Heart left ventricle (tissue), 16 donors: ENCODE measurements at regions of chr16 and their contacts with region 1.

Region 1: DNA sequence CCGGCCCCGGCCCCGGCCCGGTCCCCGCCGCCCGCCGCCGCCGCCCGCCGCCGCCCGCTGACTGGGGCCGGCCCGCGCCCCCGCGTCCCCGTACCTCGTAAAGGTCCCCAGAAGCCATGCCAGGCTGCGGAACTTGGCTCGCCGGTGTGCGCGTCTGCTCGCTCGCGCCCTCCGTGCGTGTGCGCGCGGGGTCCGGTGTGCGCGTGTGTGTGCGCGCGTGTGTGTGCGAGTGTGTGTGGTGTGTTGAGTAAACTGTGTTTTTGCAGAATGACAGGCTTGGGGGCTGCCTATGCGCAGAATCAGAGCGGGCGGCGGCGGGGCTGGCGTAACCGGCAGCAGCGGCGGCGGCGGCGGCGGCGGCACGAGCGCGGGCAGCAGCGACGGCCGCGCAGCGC is 345 bp downstream of the CDYL2 start:
- DNase-seq: peak in 4 of 5 donors; percentile 36 to 74 (median 56)
- ATAC-seq: peak in 3 of 4 donors; percentile 27 to 50 (median 49)
- H3K4me3 ChIP-seq: peak overlapping the region; percentile 34 to 82 (median 64)
- H3K27ac ChIP-seq: peak overlapping the region in 1 of 12 donors; percentile 60
- H3K4me1 ChIP-seq: peaks cover 0 to 31% (median 0%) of the 10 kb centered on the region in 12 donors
- H3K27me3 ChIP-seq: no peaks in the 10 kb centered on the region
- CTCF ChIP-seq: no peak
- POLR2A ChIP-seq: no peak

Region 2: GRCh38 chr16:80540516-80541272 is 263.4 kb before region 1 on chr16 and contains the start of gene DYNLRB2:
- intact Hi-C with region 1: loop called in 4 of 10 experiments (anchors 5 to 10 kb)
- DNase-seq: peak; percentile 94 to 96 (median 96)
- ATAC-seq: peak; percentile 95 to 99 (median 98)
- H3K4me3 ChIP-seq: peak within 1 kb of the TSS; percentile 40 to 80 (median 66)
- H3K27ac ChIP-seq: peak within 1 kb of the TSS in 9 of 12 donors; percentile 19 to 63 (median 38)
- H3K4me1 ChIP-seq: peaks cover 0 to 11% (median 4%) of the 10 kb centered on the region in 12 donors
- H3K27me3 ChIP-seq: peaks cover 0 to 12% (median 0%) of the 10 kb centered on the region in 9 donors
- CTCF ChIP-seq: peak in 1 of 12 donors; percentile 9
- POLR2A ChIP-seq: peak in 1 of 2 donors; percentile 45
- total RNA-seq, gene DYNLRB2: 0.49 to 2.1 (median 0.91) TPM in 4 of 9 donors, not detected in the others

Region 3: GRCh38 chr16:80691111-80691741 is 112.8 kb before region 1 on chr16:
- intact Hi-C with region 1: no loop called
- DNase-seq: no peak
- ATAC-seq: no peak
- H3K4me3 ChIP-seq: no peak overlapping the region
- H3K27ac ChIP-seq: no peak overlapping the region
- H3K4me1 ChIP-seq: no peaks in the 10 kb centered on the region
- H3K27me3 ChIP-seq: no peaks in the 10 kb centered on the region
- CTCF ChIP-seq: no peak
- POLR2A ChIP-seq: no peak